Heart left ventricle (tissue), 16 donors: ENCODE measurements at regions of chr9 and their contacts with region 1.

Region 1: DNA sequence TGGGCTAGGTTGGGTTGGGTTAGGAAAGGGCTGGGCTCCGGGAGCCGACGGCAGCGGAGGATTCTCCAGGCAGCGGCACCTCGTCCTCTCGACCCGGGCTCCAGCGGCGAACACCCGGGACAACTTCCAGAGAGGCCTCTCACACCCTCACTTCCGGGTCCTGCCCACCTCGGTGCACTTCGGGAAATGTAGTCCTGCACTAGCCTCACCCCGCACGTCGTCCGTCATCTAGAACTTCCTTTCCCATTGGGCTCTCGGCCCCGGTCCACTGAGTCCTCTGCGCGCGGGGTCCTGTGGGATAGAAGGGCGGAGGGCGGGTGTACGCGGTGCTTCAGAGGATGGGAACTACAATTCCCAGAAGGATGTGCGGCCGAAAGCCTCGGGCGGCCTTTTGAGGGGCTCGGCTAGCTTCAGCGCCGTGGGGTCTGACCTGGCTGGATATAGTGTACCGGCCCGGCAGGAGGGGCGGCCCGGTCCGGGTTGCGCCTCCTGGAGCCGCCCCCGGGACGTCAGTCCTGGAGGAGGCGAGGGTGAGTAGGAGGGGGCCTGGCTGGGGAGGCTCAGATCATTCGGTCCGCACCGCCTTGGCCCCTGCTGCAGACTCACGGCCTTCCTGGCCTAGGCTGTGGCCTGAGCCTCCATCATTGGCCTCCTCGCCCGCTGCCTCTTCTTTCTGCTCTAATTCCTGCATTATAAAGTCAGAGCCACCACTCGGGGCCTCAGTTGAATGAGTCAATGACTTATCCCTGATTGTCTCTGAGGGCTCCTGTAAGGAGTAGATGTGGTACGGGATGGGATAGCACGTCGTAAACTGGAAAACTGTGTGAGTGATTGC is at the starts of genes ERP44 and INVS:
- DNase-seq: peak; percentile 99 to 100 (median 99)
- ATAC-seq: peak; percentile 99
- H3K4me3 ChIP-seq: peak within 1 kb of the TSS; percentile 57 to 98 (median 87)
- H3K27ac ChIP-seq: peak within 1 kb of the TSS; percentile 56 to 96 (median 90)
- H3K4me1 ChIP-seq: peaks cover 0 to 42% (median 24%) of the 10 kb centered on the region in 12 donors
- H3K27me3 ChIP-seq: no peaks in the 10 kb centered on the region
- CTCF ChIP-seq: no peak
- POLR2A ChIP-seq: peak in 1 of 2 donors; percentile 86
- total RNA-seq, gene ERP44: 7.9 to 20.5 (median 15.7) TPM
- total RNA-seq, gene INVS: 4.9 to 10.4 (median 7.5) TPM

Region 2: DNA sequence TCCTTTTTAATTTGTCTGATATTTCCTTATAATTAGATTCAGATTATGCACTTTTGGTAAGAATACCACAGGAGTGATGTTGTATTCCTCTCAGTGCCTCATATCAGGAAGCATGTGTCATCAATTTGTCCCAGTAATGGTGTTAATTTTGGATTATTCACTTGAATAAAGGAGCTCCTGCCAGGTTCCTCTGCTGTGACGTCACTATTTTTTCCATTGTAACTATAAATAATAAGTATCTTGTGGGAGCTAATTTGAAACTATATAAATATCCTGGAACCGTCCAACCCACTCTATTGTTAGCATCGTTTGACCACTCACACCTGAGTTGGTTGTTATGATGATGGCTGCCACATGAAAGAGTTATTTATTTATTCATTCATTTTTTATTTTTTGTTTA is 107.8 kb after region 1 on chr9:
- intact Hi-C with region 1: loop called in 3 of 10 experiments (anchors 5 to 10 kb)
- DNase-seq: peak in 2 of 5 donors; percentile 30 to 32
- ATAC-seq: peak; percentile 75 to 92 (median 88)
- H3K4me3 ChIP-seq: no peak overlapping the region
- H3K27ac ChIP-seq: peak overlapping the region in 1 of 12 donors; percentile 22
- H3K4me1 ChIP-seq: peaks cover 0 to 22% (median 10%) of the 10 kb centered on the region in 12 donors
- H3K27me3 ChIP-seq: no peaks in the 10 kb centered on the region
- CTCF ChIP-seq: no peak
- POLR2A ChIP-seq: no peak

Region 3: GRCh38 chr9:100216178-100216787 is 117.2 kb after region 1 on chr9:
- intact Hi-C with region 1: loop called in 2 of 10 experiments (anchors 10 kb)
- DNase-seq: peak in 4 of 5 donors; percentile 27 to 50 (median 36)
- ATAC-seq: peak in 3 of 4 donors; percentile 55 to 62 (median 61)
- H3K4me3 ChIP-seq: no peak overlapping the region
- H3K27ac ChIP-seq: no peak overlapping the region
- H3K4me1 ChIP-seq: peaks cover 0 to 7% (median 0%) of the 10 kb centered on the region in 12 donors
- H3K27me3 ChIP-seq: no peaks in the 10 kb centered on the region
- CTCF ChIP-seq: peak; percentile 42 to 70 (median 63)
- POLR2A ChIP-seq: no peak